ENCODE measurements at regions of chr1 and their contacts with region 1.

Region 1: GRCh38 chr1:197902454-197903195 is at the start of gene C1orf53:
- DNase-seq: peak; percentile 73 to 92
- H3K4me3 ChIP-seq: peak within 1 kb of the TSS; percentile 65 to 83
- H3K27ac ChIP-seq: peak within 1 kb of the TSS; percentile 82 to 84
- H3K4me1 ChIP-seq: peaks cover 0 to 8% (median 0%) of the 10 kb centered on the region in 4 donors
- H3K27me3 ChIP-seq: peaks cover 0 to 3% of the 10 kb centered on the region in 2 donors
- CTCF ChIP-seq: peak; percentile 8 to 17

Region 2: GRCh38 chr1:197775282-197776262 is 127.1 kb before region 1 on chr1 and contains the start of gene DENND1B:
- intact Hi-C with region 1: loop called (anchors 5 kb)
- DNase-seq: peak; percentile 51 to 84
- H3K4me3 ChIP-seq: peak within 1 kb of the TSS; percentile 78 to 87
- H3K27ac ChIP-seq: peak within 1 kb of the TSS; percentile 87 to 94
- H3K4me1 ChIP-seq: peaks cover 0 to 33% (median 18%) of the 10 kb centered on the region in 4 donors
- H3K27me3 ChIP-seq: no peaks in the 10 kb centered on the region
- CTCF ChIP-seq: peak in 1 of 2 experiments; percentile 9

Measured in tibial artery (tissue), 4 donors.